Activated B cell treated with CpG ODN at 0.5 μM for 24 hours (primary cell): ENCODE measurements at regions of chr9 and their contacts with region 1.

Region 1: GRCh38 chr9:22383720-22384119 is 62.9 kb upstream of the DMRTA1 start:
- DNase-seq: no peak
- ATAC-seq: no peak
- H3K4me3 Mint-ChIP-seq: no peak overlapping the region
- H3K27ac Mint-ChIP-seq: no peak overlapping the region
- H3K4me1 Mint-ChIP-seq: no peaks in the 10 kb centered on the region
- H3K27me3 Mint-ChIP-seq: no peaks in the 10 kb centered on the region
- CTCF ChIP-seq: no peak

Region 2: DNA sequence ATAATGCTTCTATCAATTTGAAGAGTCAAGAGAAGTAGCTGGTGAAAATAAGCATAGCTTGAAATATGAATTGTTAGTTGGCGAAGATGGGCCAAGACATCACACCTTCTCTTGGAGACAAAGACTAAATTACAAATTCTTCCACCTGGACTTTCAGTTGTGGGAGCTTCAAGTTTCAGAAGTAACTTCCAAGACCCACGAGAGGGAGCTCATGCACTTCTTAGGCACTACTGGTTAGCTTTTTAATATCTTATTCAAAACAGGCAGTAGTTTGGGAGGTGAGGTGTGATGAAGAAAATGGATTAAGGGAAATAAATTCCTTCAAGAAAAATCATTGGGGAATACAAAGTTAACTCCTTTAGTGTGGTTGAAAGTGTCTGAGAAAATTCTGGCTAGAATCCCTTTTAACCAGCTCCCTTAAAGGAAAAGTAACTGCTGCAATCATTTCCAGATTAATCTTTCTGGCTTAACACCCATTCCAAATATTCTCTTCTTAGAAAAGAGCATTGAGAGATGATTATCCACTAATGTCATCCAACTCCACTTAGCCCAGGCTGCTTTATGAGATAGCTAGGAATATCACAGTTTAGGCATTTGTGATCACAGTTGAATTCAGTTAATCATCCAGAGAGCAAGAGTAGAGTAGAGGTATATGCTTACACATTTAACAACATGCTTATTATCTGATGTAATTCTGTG is 76.6 kb before region 1 on chr9:
- CTCF ChIA-PET with region 1: no interaction called
- POLR2A ChIA-PET with region 1: no interaction called
- intact Hi-C with region 1: no loop called
- DNase-seq: no peak
- ATAC-seq: no peak
- H3K4me3 Mint-ChIP-seq: no peak overlapping the region
- H3K27ac Mint-ChIP-seq: no peak overlapping the region
- H3K4me1 Mint-ChIP-seq: no peaks in the 10 kb centered on the region
- H3K27me3 Mint-ChIP-seq: peaks cover 7% of the 10 kb centered on the region
- CTCF ChIP-seq: no peak

Region 3: DNA sequence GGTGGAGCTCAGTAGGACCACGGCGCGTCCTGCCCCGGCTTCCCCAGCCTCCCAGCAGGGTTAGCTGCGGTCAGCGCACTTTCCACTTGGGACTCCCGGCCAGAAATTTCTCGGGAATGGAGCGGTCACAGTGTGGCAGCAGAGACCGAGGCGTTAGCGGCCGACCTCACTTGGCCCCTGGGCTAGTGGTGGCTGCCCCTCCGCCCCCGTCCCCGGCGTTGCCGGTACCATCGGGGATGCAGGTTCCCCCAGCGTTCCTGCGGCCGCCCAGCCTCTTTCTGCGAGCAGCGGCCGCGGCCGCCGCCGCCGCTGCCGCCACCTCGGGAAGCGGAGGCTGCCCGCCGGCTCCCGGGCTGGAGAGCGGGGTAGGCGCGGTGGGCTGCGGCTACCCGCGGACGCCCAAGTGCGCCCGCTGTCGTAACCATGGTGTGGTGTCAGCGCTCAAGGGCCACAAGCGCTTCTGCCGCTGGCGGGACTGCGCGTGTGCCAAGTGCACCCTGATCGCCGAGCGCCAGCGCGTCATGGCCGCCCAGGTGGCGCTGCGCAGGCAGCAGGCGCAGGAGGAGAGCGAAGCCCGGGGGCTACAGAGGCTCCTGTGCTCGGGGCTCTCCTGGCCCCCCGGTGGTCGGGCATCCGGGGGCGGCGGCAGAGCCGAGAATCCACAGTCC is 63.4 kb after region 1 on chr9:
- CTCF ChIA-PET with region 1: no interaction called
- POLR2A ChIA-PET with region 1: no interaction called
- intact Hi-C with region 1: loop called (anchors 10 kb)
- DNase-seq: peak; percentile 42
- ATAC-seq: peak; percentile 79
- H3K4me3 Mint-ChIP-seq: peak overlapping the region; percentile 60
- H3K27ac Mint-ChIP-seq: no peak overlapping the region
- H3K4me1 Mint-ChIP-seq: peaks cover 11% of the 10 kb centered on the region
- H3K27me3 Mint-ChIP-seq: peaks cover 41% of the 10 kb centered on the region
- CTCF ChIP-seq: no peak

Region 4: DNA sequence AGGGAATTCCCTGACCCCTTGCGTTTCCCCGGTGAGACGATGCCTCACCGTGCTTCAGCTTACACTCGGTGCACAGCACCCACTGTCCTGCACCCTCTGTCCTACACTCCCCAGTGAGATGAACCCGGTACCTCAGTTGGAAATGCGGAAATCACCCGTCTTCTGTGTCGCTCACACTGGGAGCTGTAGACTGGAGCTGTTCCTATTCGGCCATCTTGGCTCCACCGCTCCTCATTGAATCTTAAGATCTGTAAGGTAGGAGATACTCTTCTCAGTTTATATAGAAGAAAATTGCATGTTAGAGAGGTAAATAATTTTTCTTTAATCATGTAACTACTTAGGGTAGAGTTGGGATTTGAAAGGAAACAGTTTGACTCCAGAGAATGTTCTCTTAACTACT is 125.1 kb after region 1 on chr9:
- CTCF ChIA-PET with region 1: no interaction called
- POLR2A ChIA-PET with region 1: no interaction called
- intact Hi-C with region 1: no loop called
- DNase-seq: no peak
- ATAC-seq: no peak
- H3K4me3 Mint-ChIP-seq: no peak overlapping the region
- H3K27ac Mint-ChIP-seq: no peak overlapping the region
- H3K4me1 Mint-ChIP-seq: no peaks in the 10 kb centered on the region
- H3K27me3 Mint-ChIP-seq: peaks cover 2% of the 10 kb centered on the region
- CTCF ChIP-seq: no peak